ENCODE measurements at regions of chr5 and their contacts with region 1.

Region 1: GRCh38 chr5:140346348-140347101 is at the start of gene HBEGF:
- DNase-seq: peak in 31 of 35 experiments; percentile 4 to 63 (median 26)
- ATAC-seq: peak; percentile 70 to 77 (median 75)
- H3K4me3 ChIP-seq: peak within 1 kb of the TSS; percentile 48 to 73
- H3K4me3 Mint-ChIP-seq: peak within 1 kb of the TSS; percentile 66 to 81 (median 74)
- H3K27ac ChIP-seq: no peak within 1 kb of the TSS
- H3K27ac Mint-ChIP-seq: peak within 1 kb of the TSS; percentile 36 to 72
- H3K4me1 ChIP-seq: peaks cover 36 to 39% of the 10 kb centered on the region in 2 experiments
- H3K4me1 Mint-ChIP-seq: peaks cover 46 to 51% (median 49%) of the 10 kb centered on the region in 3 donors
- H3K27me3 ChIP-seq: peaks cover 0 to 22% of the 10 kb centered on the region in 2 experiments
- H3K27me3 Mint-ChIP-seq: peaks cover 0 to 10% of the 10 kb centered on the region in 2 donors
- total RNA-seq, gene HBEGF: 0.47 to 2.8 (median 1.9) TPM

Region 2: GRCh38 chr5:140357726-140358093 is 11.2 kb after region 1 on chr5:
- CTCF ChIA-PET with region 1: interaction called, 12 to 22 read pairs
- POLR2A ChIA-PET with region 1: no interaction called
- DNase-seq: peak in 34 of 35 experiments; percentile 40 to 84 (median 62)
- ATAC-seq: peak; percentile 90 to 96 (median 94)
- H3K4me3 ChIP-seq: no peak overlapping the region
- H3K4me3 Mint-ChIP-seq: peak overlapping the region; percentile 54 to 67 (median 62)
- H3K27ac ChIP-seq: no peak overlapping the region
- H3K27ac Mint-ChIP-seq: peak overlapping the region in 1 of 2 donors; percentile 72
- H3K4me1 ChIP-seq: peaks cover 0 to 12% of the 10 kb centered on the region in 2 experiments
- H3K4me1 Mint-ChIP-seq: peaks cover 8 to 10% (median 8%) of the 10 kb centered on the region in 3 donors
- H3K27me3 ChIP-seq: peaks cover 0 to 4% of the 10 kb centered on the region in 2 experiments
- H3K27me3 Mint-ChIP-seq: peaks cover 3 to 7% of the 10 kb centered on the region in 2 donors

Region 3: GRCh38 chr5:140468188-140468587 is 121.7 kb after region 1 on chr5:
- CTCF ChIA-PET with region 1: no interaction called
- POLR2A ChIA-PET with region 1: no interaction called
- DNase-seq: no peak
- ATAC-seq: no peak
- H3K4me3 ChIP-seq: no peak overlapping the region
- H3K4me3 Mint-ChIP-seq: no peak overlapping the region
- H3K27ac ChIP-seq: no peak overlapping the region
- H3K27ac Mint-ChIP-seq: peak overlapping the region in 1 of 2 donors; percentile 39
- H3K4me1 ChIP-seq: no peaks in the 10 kb centered on the region
- H3K4me1 Mint-ChIP-seq: no peaks in the 10 kb centered on the region
- H3K27me3 ChIP-seq: no peaks in the 10 kb centered on the region
- H3K27me3 Mint-ChIP-seq: no peaks in the 10 kb centered on the region